MCF 10A (cell line): ENCODE measurements at regions of chr5 and their contacts with region 1.

Region 1: GRCh38 chr5:149490599-149491485 is 60.4 kb downstream of the CSNK1A1 start:
- DNase-seq: no peak
- H3K4me3 Mint-ChIP-seq: no peak overlapping the region
- H3K27ac Mint-ChIP-seq: peak overlapping the region; percentile 98
- H3K4me1 Mint-ChIP-seq: peaks cover 44% of the 10 kb centered on the region
- H3K27me3 Mint-ChIP-seq: no peaks in the 10 kb centered on the region
- CTCF ChIP-seq: no peak

Region 2: DNA sequence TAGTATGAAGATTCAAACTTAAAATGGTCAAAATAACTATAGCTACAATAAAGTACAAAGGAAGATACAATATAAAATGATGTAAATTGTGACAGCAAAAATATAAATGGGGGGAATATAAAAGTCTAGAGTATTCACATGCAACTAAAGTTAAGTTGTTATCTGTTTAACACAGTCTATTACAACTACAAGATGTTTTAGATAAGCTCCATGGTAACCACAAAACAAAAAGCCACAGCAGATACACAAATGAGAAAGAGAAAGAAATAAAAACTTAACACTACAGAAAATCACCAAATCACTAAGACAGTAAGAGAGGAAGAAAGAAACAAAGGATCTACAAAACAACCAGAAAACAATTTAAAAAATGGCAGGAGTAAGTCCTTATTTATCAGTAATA is 411.0 kb before region 1 on chr5:
- CTCF ChIA-PET with region 1: no interaction called
- POLR2A ChIA-PET with region 1: no interaction called
- intact Hi-C with region 1: no loop called
- DNase-seq: no peak
- H3K4me3 Mint-ChIP-seq: no peak overlapping the region
- H3K27ac Mint-ChIP-seq: no peak overlapping the region
- H3K4me1 Mint-ChIP-seq: no peaks in the 10 kb centered on the region
- H3K27me3 Mint-ChIP-seq: no peaks in the 10 kb centered on the region
- CTCF ChIP-seq: no peak

Region 3: GRCh38 chr5:149471406-149472183 is 19.2 kb before region 1 on chr5:
- CTCF ChIA-PET with region 1: interaction called, 47 read pairs
- POLR2A ChIA-PET with region 1: interaction called, 1,058 read pairs
- intact Hi-C with region 1: no loop called
- DNase-seq: peak; percentile 63
- H3K4me3 Mint-ChIP-seq: no peak overlapping the region
- H3K27ac Mint-ChIP-seq: peak overlapping the region; percentile 64
- H3K4me1 Mint-ChIP-seq: peaks cover 28% of the 10 kb centered on the region
- H3K27me3 Mint-ChIP-seq: no peaks in the 10 kb centered on the region
- CTCF ChIP-seq: no peak

Region 4: DNA sequence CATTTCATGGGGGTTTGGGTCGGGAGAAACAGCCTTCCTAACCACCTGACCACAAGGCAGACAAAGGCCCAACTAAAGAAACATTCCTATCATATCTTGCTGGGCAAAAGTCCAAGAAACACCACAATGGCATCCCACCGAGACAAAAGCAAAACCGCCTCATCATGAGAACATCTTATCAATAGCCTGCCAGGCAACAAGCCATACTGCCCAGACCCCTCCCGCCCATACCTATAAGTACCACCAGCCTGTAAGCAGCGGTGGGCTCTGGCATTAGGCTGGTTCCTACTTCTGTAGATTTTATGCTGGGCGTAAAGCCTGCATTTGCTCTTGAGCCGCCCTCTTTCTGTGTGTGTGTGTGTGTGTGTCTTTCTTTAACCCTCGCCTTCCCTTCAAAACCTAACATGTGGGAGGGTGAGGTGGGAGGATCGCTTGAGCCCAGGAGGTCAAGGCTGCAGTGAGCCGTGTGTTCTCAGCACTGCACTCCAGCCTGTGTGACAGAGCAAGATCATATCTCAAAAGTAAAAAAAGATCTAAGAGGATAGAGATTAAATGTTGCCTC is 396.9 kb after region 1 on chr5:
- CTCF ChIA-PET with region 1: no interaction called
- POLR2A ChIA-PET with region 1: no interaction called
- intact Hi-C with region 1: no loop called
- DNase-seq: no peak
- H3K4me3 Mint-ChIP-seq: no peak overlapping the region
- H3K27ac Mint-ChIP-seq: peak overlapping the region; percentile 30
- H3K4me1 Mint-ChIP-seq: peaks cover 34% of the 10 kb centered on the region
- H3K27me3 Mint-ChIP-seq: no peaks in the 10 kb centered on the region
- CTCF ChIP-seq: no peak